ENCODE measurements at regions of chr9 and their contacts with region 1.

Region 1: GRCh38 chr9:34809504-34810186 is 99.7 kb upstream of the CCL21 start:
- DNase-seq: peak; percentile 49 to 83
- H3K4me3 ChIP-seq: peak overlapping the region; percentile 18 to 54 (median 28); a peak in 7 of 8 replicates
- H3K27ac ChIP-seq: no peak overlapping the region
- H3K4me1 ChIP-seq: peaks cover 0 to 3% (median 0%) of the 10 kb centered on the region in 4 experiments; a peak in 2 of 7 replicates
- H3K27me3 ChIP-seq: peaks cover 0 to 25% (median 12%) of the 10 kb centered on the region in 4 experiments; a peak in 5 of 7 replicates
- CTCF ChIP-seq: peak; percentile 77 to 86 (median 79)
- EP300 ChIP-seq: no peak
- POLR2A ChIP-seq: no peak
- RAD21 ChIP-seq: peak; percentile 43 to 62

Region 2: DNA sequence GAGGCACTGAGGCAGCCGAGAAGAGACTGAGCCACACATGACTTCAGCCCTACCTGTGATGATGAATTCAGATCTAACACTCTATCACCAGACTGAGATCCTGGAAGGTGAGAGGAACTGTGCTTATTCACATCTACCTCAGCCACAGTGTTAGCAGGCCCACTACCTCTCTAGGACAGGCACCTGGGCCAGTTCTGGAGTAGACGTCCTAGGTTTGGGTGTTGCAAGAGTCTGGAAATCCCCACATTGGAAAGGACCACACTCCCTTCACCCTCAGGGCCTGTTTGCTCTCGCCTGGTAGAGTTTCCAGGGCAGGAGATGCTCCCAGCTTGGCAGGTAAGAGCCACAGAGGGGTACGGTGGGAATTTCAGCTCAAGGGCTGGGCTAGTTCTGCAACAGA is 14.1 kb after region 1 on chr9:
- CTCF ChIA-PET with region 1: interaction called, 15 read pairs
- POLR2A ChIA-PET with region 1: no interaction called
- DNase-seq: no peak
- H3K4me3 ChIP-seq: no peak overlapping the region
- H3K27ac ChIP-seq: no peak overlapping the region
- H3K4me1 ChIP-seq: no peaks in the 10 kb centered on the region
- H3K27me3 ChIP-seq: no peaks in the 10 kb centered on the region; a peak in 2 of 7 replicates
- CTCF ChIP-seq: no peak
- EP300 ChIP-seq: no peak
- POLR2A ChIP-seq: no peak
- RAD21 ChIP-seq: no peak